Transverse colon (tissue), 4 donors: ENCODE measurements at regions of chr2 and their contacts with region 1.

Region 1: DNA sequence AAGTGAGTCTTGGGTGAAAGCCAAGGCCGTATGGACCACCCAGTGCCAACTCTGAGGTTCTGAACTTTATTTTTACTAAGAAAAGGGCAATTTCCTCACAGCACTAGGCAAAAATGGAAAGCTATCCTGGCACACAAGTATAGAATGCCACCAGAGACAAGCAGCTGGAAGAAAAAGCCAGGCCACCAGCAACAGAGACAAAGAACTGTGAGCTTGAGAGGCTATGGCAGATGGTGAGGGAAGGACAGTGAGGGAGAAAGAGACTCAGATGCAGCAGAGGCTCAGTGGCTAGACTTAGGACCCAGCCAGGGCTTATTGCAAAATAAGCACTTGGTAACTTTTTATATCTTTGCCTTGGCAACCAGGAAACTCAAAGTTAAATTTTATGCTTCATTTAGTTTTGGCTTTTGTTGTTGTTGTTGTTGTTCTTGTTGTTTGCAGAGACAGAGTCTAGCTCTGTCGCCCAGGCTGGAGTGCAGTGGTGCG is 78.0 kb upstream of the BZW1 start:
- DNase-seq: no peak
- H3K4me3 ChIP-seq: no peak overlapping the region
- H3K27ac ChIP-seq: no peak overlapping the region
- H3K4me1 ChIP-seq: no peaks in the 10 kb centered on the region
- H3K27me3 ChIP-seq: peaks cover 3% of the 10 kb centered on the region
- CTCF ChIP-seq: no peak
- EP300 ChIP-seq: no peak
- POLR2A ChIP-seq: no peak

Region 2: DNA sequence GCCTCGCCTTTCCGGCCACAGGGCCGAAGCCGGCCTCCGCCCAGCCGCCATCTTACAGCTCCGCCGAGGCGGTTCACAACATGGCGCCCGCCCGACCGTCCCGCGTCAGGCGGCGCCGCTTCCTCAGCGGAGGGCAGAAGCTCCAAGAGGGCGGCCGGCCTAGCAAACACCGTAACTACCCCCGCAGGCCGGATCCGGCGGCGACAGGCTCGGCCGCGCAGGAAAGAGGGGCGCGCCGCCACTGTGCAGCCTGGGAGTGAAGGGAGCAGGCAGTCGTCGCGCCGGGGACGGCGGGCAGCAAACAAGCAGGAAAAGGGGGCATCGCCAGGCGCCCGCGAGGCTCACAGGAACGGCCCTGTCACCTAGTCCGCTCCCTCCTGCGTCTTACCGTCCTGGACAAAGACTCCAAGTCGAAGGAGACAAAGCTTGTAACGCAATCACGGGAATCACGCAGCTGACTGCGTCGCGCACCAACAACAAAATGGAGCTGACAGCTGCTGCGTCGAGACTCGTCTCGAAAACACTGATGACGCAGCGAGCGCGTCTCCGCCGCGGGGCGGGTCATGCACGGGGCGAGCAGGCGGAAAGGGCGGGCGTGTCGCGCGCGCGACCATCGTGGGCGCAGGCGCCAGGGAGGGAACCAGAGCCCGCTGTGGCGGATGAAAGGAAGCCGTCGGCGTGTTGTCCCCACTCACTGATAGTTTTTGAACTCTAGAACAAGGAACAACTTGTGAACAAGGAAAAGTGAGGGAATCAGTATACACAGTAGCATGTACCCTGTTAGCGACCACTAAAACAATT is 130.6 kb after region 1 on chr2 and contains the start of gene CLK1:
- in situ Hi-C with region 1: no loop called
- intact Hi-C with region 1: no loop called
- DNase-seq: peak; percentile 98
- H3K4me3 ChIP-seq: peak within 1 kb of the TSS; percentile 73 to 92 (median 80)
- H3K27ac ChIP-seq: peak within 1 kb of the TSS; percentile 98 to 100 (median 99)
- H3K4me1 ChIP-seq: peaks cover 9 to 42% (median 25%) of the 10 kb centered on the region in 4 donors
- H3K27me3 ChIP-seq: no peaks in the 10 kb centered on the region
- CTCF ChIP-seq: peak in 1 of 5 experiments; percentile 11
- EP300 ChIP-seq: no peak
- POLR2A ChIP-seq: peak; percentile 100
- total RNA-seq, gene CLK1: 115 to 231 (median 127) TPM

Region 3: DNA sequence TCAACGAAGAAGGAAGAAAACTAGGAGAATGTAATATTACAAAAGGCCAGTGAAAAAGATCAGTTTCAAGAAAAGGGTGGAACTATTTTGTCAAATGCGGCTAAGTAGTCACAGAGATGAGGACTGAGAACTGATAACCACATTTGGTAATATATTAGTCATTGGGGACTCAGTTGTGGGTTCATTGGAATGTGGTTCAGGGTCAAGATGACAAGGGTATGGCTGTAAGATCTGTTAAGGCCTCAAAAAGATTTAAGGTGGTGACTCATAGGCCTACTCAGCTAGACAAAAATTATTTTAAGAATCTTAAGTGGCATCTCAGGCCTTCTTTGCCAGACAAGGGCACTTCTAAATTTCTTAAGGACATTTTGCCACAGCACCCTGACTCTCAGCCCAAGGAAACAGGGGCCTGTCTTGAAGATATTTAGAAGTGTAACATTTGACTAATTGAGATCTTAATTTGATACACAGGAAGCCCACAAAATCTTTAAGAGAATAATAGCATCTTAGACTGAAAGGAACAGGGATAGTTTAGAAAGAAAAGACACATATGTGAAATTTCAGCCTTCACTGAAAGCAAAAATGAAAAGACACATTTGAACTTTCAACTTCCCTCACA is 799.0 kb after region 1 on chr2:
- in situ Hi-C with region 1: no loop called
- intact Hi-C with region 1: loop called (anchors 5 kb)
- DNase-seq: no peak
- H3K4me3 ChIP-seq: no peak overlapping the region
- H3K27ac ChIP-seq: no peak overlapping the region
- H3K4me1 ChIP-seq: no peaks in the 10 kb centered on the region
- H3K27me3 ChIP-seq: no peaks in the 10 kb centered on the region
- CTCF ChIP-seq: no peak
- EP300 ChIP-seq: no peak
- POLR2A ChIP-seq: no peak